ENCODE measurements at regions of chr17 and their contacts with region 1.

Region 1: DNA sequence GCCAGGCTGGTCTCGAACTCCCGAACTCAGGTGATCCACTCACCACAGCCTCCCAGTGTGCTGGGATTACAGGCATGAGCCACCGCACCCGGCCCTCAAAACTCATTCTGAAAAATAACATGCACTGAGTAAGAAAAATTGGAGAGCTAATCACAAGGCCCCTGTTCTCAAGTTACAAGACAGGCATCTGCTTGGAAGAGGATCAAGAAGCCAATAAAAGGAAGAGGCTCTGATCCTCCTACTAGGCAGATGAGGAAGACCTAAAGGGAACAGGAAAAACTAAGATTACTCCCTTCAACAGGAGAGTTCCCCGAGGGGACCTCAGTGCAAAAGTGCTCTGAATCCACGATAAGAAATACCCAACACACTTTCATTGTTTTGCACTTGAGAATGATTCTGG is 18.4 kb downstream of the BLMH start:
- DNase-seq: no peak
- ATAC-seq: no peak
- H3K4me3 ChIP-seq: no peak overlapping the region
- H3K27ac ChIP-seq: no peak overlapping the region
- H3K4me1 ChIP-seq: no peaks in the 10 kb centered on the region
- H3K27me3 ChIP-seq: no peaks in the 10 kb centered on the region
- CTCF ChIP-seq: no peak

Region 2: GRCh38 chr17:30134551-30134950 is 138.8 kb before region 1 on chr17:
- intact Hi-C with region 1: loop called in 1 of 3 experiments (anchors 5 kb)
- DNase-seq: no peak
- ATAC-seq: no peak
- H3K4me3 ChIP-seq: no peak overlapping the region
- H3K27ac ChIP-seq: no peak overlapping the region
- H3K4me1 ChIP-seq: peaks cover 0 to 2% (median 0%) of the 10 kb centered on the region in 3 donors
- H3K27me3 ChIP-seq: no peaks in the 10 kb centered on the region
- CTCF ChIP-seq: no peak

Region 3: GRCh38 chr17:30148376-30148775 is 125.0 kb before region 1 on chr17:
- intact Hi-C with region 1: no loop called
- DNase-seq: no peak
- ATAC-seq: no peak
- H3K4me3 ChIP-seq: no peak overlapping the region
- H3K27ac ChIP-seq: no peak overlapping the region
- H3K4me1 ChIP-seq: peaks cover 0 to 3% (median 0%) of the 10 kb centered on the region in 3 donors
- H3K27me3 ChIP-seq: no peaks in the 10 kb centered on the region
- CTCF ChIP-seq: no peak

Region 4: GRCh38 chr17:30230591-30231125 is 42.7 kb before region 1 on chr17:
- intact Hi-C with region 1: no loop called
- DNase-seq: no peak
- ATAC-seq: no peak
- H3K4me3 ChIP-seq: no peak overlapping the region
- H3K27ac ChIP-seq: no peak overlapping the region
- H3K4me1 ChIP-seq: no peaks in the 10 kb centered on the region
- H3K27me3 ChIP-seq: no peaks in the 10 kb centered on the region
- CTCF ChIP-seq: no peak

Measured in pancreas (tissue), 10 donors.